Dendritic cell treated with granulocyte-macrophage colony-stimulating factor and Interleukin-4, amounts not matched to agents 40 ng/mL and 50 ng/mL, for 4 days (primary cell): ENCODE measurements at regions of chr2 and their contacts with region 1.

Region 1: DNA sequence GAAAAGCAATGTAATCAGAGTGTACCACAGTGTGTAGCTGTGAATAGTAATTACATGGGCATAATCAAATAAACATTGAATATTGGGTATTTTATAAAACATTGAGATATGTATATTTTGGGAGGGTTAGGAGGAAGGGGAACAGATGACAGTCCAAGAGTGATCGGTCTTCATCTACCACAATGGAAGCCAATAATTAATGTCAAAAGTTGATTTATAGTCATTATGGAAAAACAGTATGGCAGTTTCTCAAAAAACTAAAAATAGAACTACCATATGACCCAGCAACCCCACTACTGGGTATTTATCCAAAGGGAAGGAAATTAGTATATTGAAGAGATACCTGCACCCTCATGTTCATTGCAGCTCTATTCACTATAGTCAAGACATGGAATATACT is 5.8 kb upstream of the LAPTM4A start:
- H3K4me3 Mint-ChIP-seq: no peak overlapping the region
- H3K27ac Mint-ChIP-seq: no peak overlapping the region
- H3K4me1 Mint-ChIP-seq: no peaks in the 10 kb centered on the region
- H3K27me3 Mint-ChIP-seq: peaks cover 39% of the 10 kb centered on the region

Region 2: DNA sequence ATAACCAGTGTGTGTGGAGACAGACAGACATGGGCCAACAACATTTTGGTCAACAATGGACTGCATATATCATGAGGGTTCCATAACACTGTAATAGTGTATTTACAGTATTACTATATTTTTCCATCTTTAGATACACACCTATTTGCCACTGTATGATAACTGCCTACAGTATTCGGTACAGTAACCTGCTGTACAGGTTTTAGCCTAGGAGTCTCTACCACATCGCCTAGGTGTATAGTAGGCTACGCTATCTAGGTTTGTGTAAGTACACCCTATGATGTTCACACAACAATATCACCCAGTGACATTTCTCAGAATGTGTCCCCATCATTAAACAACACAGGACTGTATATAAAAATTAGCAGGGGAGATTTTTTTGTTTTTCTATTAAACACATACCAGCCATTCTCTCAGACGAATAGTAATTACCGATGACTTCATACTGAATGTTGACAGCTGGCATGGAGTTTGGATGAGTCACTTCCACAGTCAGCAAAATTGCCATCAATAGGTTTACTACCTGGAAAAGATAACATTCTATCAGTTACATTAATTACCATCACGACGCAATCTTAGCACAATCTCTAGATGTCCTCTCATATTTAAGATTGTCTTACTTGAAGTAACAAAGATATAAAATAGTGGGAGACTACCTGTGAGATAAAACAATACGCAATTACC is 16.6 kb before region 1 on chr2:
- intact Hi-C with region 1: no loop called
- H3K4me3 Mint-ChIP-seq: no peak overlapping the region
- H3K27ac Mint-ChIP-seq: no peak overlapping the region
- H3K4me1 Mint-ChIP-seq: peaks cover 46% of the 10 kb centered on the region
- H3K27me3 Mint-ChIP-seq: no peaks in the 10 kb centered on the region

Region 3: DNA sequence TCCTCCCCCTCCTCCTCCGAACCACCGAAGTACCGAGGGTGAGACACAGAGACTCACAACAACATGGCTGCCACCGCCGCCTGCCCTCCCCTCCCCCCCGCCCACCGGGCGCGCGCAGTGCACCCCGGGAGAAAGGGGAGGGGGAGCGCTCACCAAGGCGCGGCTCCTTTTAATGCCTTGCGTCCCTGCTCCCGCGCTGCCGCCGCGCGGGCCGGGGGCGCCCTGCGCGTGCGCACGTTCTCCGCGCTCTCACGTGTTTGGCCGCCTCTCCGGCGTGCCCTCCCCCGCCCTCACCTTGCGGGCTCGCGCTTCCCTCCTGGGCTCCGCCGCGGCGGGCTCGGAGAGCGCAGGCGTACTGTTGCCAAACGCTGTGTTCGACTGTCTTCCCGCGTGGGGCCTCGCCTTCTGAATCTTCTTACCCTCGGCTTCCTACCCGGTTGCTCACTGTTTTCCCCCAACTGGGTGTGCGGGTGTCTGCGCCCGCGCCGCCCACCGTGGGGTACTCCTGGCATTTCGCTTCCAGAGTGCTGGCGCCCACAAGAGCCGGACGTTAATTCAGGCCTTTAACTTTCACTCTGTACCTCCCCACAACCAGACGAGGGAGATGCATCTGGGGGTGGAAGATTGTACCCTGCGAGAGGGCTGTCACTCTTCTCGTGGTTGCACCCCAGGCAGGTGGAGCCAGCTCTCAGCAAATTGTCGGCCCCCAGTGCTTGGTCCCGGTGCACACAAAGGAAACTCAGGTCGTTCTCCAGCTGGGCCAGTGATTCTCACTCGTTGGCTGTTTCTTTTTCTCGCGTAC is 293.7 kb after region 1 on chr2 and contains the start of gene PUM2:
- intact Hi-C with region 1: loop called (anchors 5 kb)
- H3K4me3 Mint-ChIP-seq: peak within 1 kb of the TSS; percentile 94
- H3K27ac Mint-ChIP-seq: no peak within 1 kb of the TSS
- H3K4me1 Mint-ChIP-seq: peaks cover 21% of the 10 kb centered on the region
- H3K27me3 Mint-ChIP-seq: no peaks in the 10 kb centered on the region